ENCODE measurements at regions of chr11 and their contacts with region 1.

Region 1: GRCh38 chr11:61083601-61084147 is 18.6 kb upstream of the CD5 start:
- DNase-seq: peak; percentile 45 to 85 (median 77)
- ATAC-seq: peak; percentile 79
- H3K4me3 ChIP-seq: peak overlapping the region; percentile 40
- H3K4me3 Mint-ChIP-seq: peak overlapping the region; percentile 74 to 90 (median 85)
- H3K27ac ChIP-seq: peak overlapping the region; percentile 80
- H3K27ac Mint-ChIP-seq: peak overlapping the region; percentile 97 to 100 (median 99)
- H3K4me1 ChIP-seq: peaks cover 28 to 51% of the 10 kb centered on the region in 2 donors
- H3K4me1 Mint-ChIP-seq: peaks cover 39 to 64% (median 54%) of the 10 kb centered on the region in 7 donors
- H3K27me3 ChIP-seq: no peaks in the 10 kb centered on the region
- H3K27me3 Mint-ChIP-seq: no peaks in the 10 kb centered on the region

Region 2: DNA sequence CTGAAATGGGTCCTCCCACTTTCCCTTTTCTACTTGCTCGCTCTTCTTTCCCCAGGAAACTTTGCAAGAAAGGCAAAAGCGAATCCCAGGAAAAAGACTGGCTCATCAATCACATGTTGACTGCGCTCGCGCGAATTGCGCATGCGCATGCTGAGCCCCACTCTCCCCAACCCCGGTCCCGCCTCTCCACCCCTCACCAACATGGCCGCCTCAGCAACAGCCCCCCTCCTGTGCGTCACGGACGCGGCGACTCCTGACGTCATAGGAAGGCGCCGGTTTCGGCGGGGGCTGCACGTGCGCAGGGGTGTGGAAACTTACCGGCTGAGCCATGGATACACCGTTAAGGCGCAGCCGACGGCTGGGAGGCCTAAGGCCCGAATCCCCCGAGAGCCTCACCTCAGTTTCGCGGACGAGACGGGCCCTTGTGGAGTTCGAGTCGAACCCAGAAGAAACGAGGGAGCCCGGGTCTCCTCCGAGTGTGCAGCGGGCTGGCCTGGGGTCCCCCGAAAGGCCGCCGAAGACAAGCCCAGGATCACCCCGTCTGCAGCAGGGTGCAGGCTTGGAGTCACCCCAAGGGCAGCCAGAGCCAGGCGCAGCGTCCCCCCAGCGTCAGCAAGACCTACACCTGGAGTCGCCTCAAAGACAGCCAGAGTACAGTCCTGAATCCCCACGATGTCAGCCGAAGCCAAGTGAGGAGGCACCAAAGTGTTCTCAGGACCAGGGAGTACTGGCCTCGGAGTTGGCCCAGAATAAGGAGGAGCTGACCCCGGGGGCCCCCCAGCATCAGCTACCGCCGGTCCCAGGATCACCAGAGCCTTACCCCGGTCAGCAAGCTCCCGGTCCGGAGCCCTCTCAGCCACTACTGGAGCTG is 241.6 kb before region 1 on chr11 and contains the start of gene CCDC86:
- CTCF ChIA-PET with region 1: no interaction called
- POLR2A ChIA-PET with region 1: no interaction called
- intact Hi-C with region 1: no loop called
- DNase-seq: peak; percentile 96 to 100 (median 99)
- ATAC-seq: peak; percentile 99
- H3K4me3 ChIP-seq: peak within 1 kb of the TSS; percentile 93
- H3K4me3 Mint-ChIP-seq: peak within 1 kb of the TSS; percentile 89 to 95 (median 91)
- H3K27ac ChIP-seq: peak within 1 kb of the TSS; percentile 78
- H3K27ac Mint-ChIP-seq: peak within 1 kb of the TSS; percentile 87 to 99 (median 95)
- H3K4me1 ChIP-seq: peaks cover 26 to 35% of the 10 kb centered on the region in 2 donors
- H3K4me1 Mint-ChIP-seq: peaks cover 31 to 49% (median 44%) of the 10 kb centered on the region in 7 donors
- H3K27me3 ChIP-seq: no peaks in the 10 kb centered on the region
- H3K27me3 Mint-ChIP-seq: peaks cover 0 to 2% (median 0%) of the 10 kb centered on the region in 5 donors
- total RNA-seq, gene CCDC86: 9.1 to 26.2 (median 11.6) TPM

Region 3: GRCh38 chr11:60978546-60979380 is 104.9 kb before region 1 on chr11:
- CTCF ChIA-PET with region 1: interaction called, 4 read pairs
- POLR2A ChIA-PET with region 1: interaction called, 60 read pairs
- intact Hi-C with region 1: no loop called
- DNase-seq: peak in 2 of 9 donors; percentile 56 to 79
- ATAC-seq: peak; percentile 40
- H3K4me3 ChIP-seq: peak overlapping the region; percentile 48
- H3K4me3 Mint-ChIP-seq: peak overlapping the region; percentile 80 to 93 (median 86)
- H3K27ac ChIP-seq: peak overlapping the region; percentile 96
- H3K27ac Mint-ChIP-seq: peak overlapping the region; percentile 91 to 100 (median 97)
- H3K4me1 ChIP-seq: peaks cover 64 to 83% of the 10 kb centered on the region in 2 donors
- H3K4me1 Mint-ChIP-seq: peaks cover 34 to 87% (median 80%) of the 10 kb centered on the region in 7 donors
- H3K27me3 ChIP-seq: no peaks in the 10 kb centered on the region
- H3K27me3 Mint-ChIP-seq: no peaks in the 10 kb centered on the region

Region 4: DNA sequence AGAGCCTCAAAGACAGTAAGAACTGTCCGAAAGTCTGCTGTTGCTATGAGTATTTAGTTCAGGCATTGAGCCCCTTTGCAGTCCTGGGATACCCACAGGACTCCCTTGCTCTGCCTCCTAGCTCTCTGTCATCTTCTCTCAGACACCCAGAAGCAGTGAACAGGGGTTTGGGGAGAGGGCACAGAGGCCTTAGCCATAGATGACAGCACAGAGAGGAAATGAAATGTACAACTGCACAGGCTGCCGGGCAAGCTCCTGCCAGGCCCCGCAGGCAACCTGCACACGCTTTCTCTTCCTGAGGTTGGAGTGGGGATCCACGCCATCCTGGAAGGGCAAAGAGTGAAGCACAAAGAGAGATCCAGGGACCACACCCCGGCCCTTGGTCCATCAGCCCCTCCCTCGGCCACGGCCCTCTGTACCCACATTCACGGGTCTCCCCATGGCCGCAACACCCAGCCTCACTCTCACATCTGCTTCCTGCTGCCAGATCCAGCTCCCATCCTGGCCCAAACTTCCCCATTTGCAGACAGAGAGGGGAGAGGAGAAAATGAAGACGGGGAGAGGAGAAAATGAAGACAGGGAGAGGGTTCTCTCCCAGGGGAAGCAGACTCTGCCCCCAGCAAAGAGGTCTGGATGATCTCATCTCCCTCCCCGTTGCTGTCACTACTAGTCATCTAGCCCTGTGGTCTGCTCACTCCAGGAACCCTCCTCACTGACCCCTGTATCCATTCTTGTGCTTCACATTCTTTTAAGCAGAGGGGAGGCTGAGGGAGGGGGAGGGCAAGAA is 71.5 kb before region 1 on chr11:
- CTCF ChIA-PET with region 1: no interaction called
- POLR2A ChIA-PET with region 1: no interaction called
- intact Hi-C with region 1: no loop called
- DNase-seq: no peak
- ATAC-seq: no peak
- H3K4me3 ChIP-seq: no peak overlapping the region
- H3K4me3 Mint-ChIP-seq: no peak overlapping the region
- H3K27ac ChIP-seq: peak overlapping the region; percentile 50
- H3K27ac Mint-ChIP-seq: peak overlapping the region; percentile 79 to 93 (median 88)
- H3K4me1 ChIP-seq: peaks cover 0 to 33% of the 10 kb centered on the region in 2 donors
- H3K4me1 Mint-ChIP-seq: peaks cover 28 to 64% (median 56%) of the 10 kb centered on the region in 7 donors
- H3K27me3 ChIP-seq: no peaks in the 10 kb centered on the region
- H3K27me3 Mint-ChIP-seq: no peaks in the 10 kb centered on the region

Region 5: DNA sequence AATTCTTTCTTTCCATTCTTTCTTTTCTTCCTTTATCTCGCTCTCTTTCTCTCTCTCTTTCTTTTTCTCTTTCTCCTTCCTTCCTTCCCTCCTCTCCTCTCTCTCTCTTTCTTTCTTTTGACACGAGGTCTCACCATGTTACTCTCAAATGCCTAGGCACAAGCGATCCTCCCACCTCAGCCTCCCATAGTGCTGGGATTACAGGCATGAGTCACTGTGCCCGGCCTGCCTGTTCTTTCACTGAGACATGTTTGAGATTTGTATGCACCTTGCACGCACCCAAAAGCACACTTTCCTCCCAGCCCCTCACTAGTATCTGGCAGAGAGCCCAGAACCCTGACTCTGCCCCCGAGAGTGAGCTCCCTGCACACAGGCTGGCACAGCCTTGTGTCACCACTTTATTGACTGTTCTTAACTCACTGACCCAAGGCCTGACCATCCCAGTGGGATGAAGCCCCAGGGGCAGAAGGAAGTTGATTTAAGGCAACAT is 55.4 kb before region 1 on chr11:
- CTCF ChIA-PET with region 1: interaction called, 10 read pairs
- POLR2A ChIA-PET with region 1: interaction called, 63 read pairs
- intact Hi-C with region 1: loop called in 1 of 2 experiments (anchors 2 kb)
- DNase-seq: peak in 3 of 9 donors; percentile 46 to 80 (median 60)
- ATAC-seq: peak; percentile 6
- H3K4me3 ChIP-seq: peak overlapping the region; percentile 30
- H3K4me3 Mint-ChIP-seq: peak overlapping the region; percentile 78 to 91 (median 86)
- H3K27ac ChIP-seq: peak overlapping the region; percentile 76
- H3K27ac Mint-ChIP-seq: peak overlapping the region; percentile 91 to 99 (median 97)
- H3K4me1 ChIP-seq: peaks cover 43 to 56% of the 10 kb centered on the region in 2 donors
- H3K4me1 Mint-ChIP-seq: peaks cover 62 to 97% (median 90%) of the 10 kb centered on the region in 7 donors
- H3K27me3 ChIP-seq: no peaks in the 10 kb centered on the region
- H3K27me3 Mint-ChIP-seq: no peaks in the 10 kb centered on the region

Region 6: GRCh38 chr11:61054927-61055562 is 28.6 kb before region 1 on chr11:
- CTCF ChIA-PET with region 1: interaction called, 6 read pairs
- POLR2A ChIA-PET with region 1: interaction called, 233 read pairs
- intact Hi-C with region 1: loop called in 1 of 2 experiments (anchors 2 kb)
- DNase-seq: no peak
- ATAC-seq: no peak
- H3K4me3 ChIP-seq: no peak overlapping the region
- H3K4me3 Mint-ChIP-seq: peak overlapping the region in 3 of 10 donors; percentile 9 to 33 (median 20)
- H3K27ac ChIP-seq: no peak overlapping the region
- H3K27ac Mint-ChIP-seq: peak overlapping the region in 2 of 9 donors; percentile 31 to 74
- H3K4me1 ChIP-seq: peaks cover 2 to 26% of the 10 kb centered on the region in 2 donors
- H3K4me1 Mint-ChIP-seq: peaks cover 20 to 68% (median 60%) of the 10 kb centered on the region in 7 donors
- H3K27me3 ChIP-seq: no peaks in the 10 kb centered on the region
- H3K27me3 Mint-ChIP-seq: no peaks in the 10 kb centered on the region

Region 7: GRCh38 chr11:61102667-61103571 is 19.2 kb after region 1 on chr11:
- CTCF ChIA-PET with region 1: interaction called, 5 read pairs
- POLR2A ChIA-PET with region 1: interaction called, 45 read pairs
- intact Hi-C with region 1: loop called (anchors 2 kb)
- DNase-seq: peak in 3 of 9 donors; percentile 39 to 47 (median 40)
- ATAC-seq: peak; percentile 28
- H3K4me3 ChIP-seq: peak overlapping the region; percentile 100
- H3K4me3 Mint-ChIP-seq: peak overlapping the region in 1 of 10 donors; percentile 97
- H3K27ac ChIP-seq: peak overlapping the region; percentile 98
- H3K27ac Mint-ChIP-seq: no peak overlapping the region
- H3K4me1 ChIP-seq: peaks cover 39 to 46% of the 10 kb centered on the region in 2 donors
- H3K4me1 Mint-ChIP-seq: peaks cover 17 to 48% (median 40%) of the 10 kb centered on the region in 7 donors
- H3K27me3 ChIP-seq: no peaks in the 10 kb centered on the region
- H3K27me3 Mint-ChIP-seq: no peaks in the 10 kb centered on the region

Region 8: GRCh38 chr11:61129639-61130523 is 46.2 kb after region 1 on chr11:
- CTCF ChIA-PET with region 1: interaction called, 15 read pairs
- POLR2A ChIA-PET with region 1: interaction called, 11 read pairs
- intact Hi-C with region 1: loop called (anchors 2 kb)
- DNase-seq: peak; percentile 82 to 94 (median 88)
- ATAC-seq: peak; percentile 96
- H3K4me3 ChIP-seq: no peak overlapping the region
- H3K4me3 Mint-ChIP-seq: peak overlapping the region; percentile 15 to 77 (median 54)
- H3K27ac ChIP-seq: peak overlapping the region; percentile 57
- H3K27ac Mint-ChIP-seq: peak overlapping the region; percentile 4 to 87 (median 72)
- H3K4me1 ChIP-seq: peaks cover 4 to 18% of the 10 kb centered on the region in 2 donors
- H3K4me1 Mint-ChIP-seq: peaks cover 10 to 29% (median 23%) of the 10 kb centered on the region in 7 donors
- H3K27me3 ChIP-seq: no peaks in the 10 kb centered on the region
- H3K27me3 Mint-ChIP-seq: no peaks in the 10 kb centered on the region

Region 9: GRCh38 chr11:61332797-61333549 is 249.3 kb after region 1 on chr11 and contains the starts of genes DDB1 and TKFC:
- CTCF ChIA-PET with region 1: no interaction called
- POLR2A ChIA-PET with region 1: no interaction called
- intact Hi-C with region 1: no loop called
- DNase-seq: peak; percentile 91 to 99 (median 97)
- ATAC-seq: peak; percentile 96
- H3K4me3 ChIP-seq: peak within 1 kb of the TSS; percentile 84
- H3K4me3 Mint-ChIP-seq: peak within 1 kb of the TSS; percentile 83 to 100 (median 95)
- H3K27ac ChIP-seq: peak within 1 kb of the TSS; percentile 99
- H3K27ac Mint-ChIP-seq: peak within 1 kb of the TSS; percentile 91 to 100 (median 98)
- H3K4me1 ChIP-seq: peaks cover 27 to 30% of the 10 kb centered on the region in 2 donors
- H3K4me1 Mint-ChIP-seq: peaks cover 33 to 67% (median 64%) of the 10 kb centered on the region in 7 donors
- H3K27me3 ChIP-seq: no peaks in the 10 kb centered on the region
- H3K27me3 Mint-ChIP-seq: no peaks in the 10 kb centered on the region
- total RNA-seq, gene DDB1: 153 to 213 (median 160) TPM
- total RNA-seq, gene TKFC: 36.9 to 59.9 (median 43.3) TPM

Measured in naive thymus-derived CD4-positive, alpha-beta T cell (primary cell).